K562 (cell line): ENCODE measurements at regions of chr4 and their contacts with region 1.

Region 1: GRCh38 chr4:183261953-183262775 is 57.9 kb downstream of the CLDN22 start:
- DNase-seq: peak; percentile 70 to 85 (median 72)
- ATAC-seq: peak; percentile 98
- H3K4me3 ChIP-seq: no peak overlapping the region
- H3K27ac ChIP-seq: no peak overlapping the region
- H3K4me1 ChIP-seq: peaks cover 0 to 4% of the 10 kb centered on the region in 2 experiments; a peak in 3 of 5 replicates
- H3K27me3 ChIP-seq: no peaks in the 10 kb centered on the region
- CTCF ChIP-seq: peak; percentile 86 to 91 (median 88)
- EP300 ChIP-seq: no peak
- POLR2A ChIP-seq: no peak
- RAD21 ChIP-seq: peak; percentile 77 to 85

Region 2: DNA sequence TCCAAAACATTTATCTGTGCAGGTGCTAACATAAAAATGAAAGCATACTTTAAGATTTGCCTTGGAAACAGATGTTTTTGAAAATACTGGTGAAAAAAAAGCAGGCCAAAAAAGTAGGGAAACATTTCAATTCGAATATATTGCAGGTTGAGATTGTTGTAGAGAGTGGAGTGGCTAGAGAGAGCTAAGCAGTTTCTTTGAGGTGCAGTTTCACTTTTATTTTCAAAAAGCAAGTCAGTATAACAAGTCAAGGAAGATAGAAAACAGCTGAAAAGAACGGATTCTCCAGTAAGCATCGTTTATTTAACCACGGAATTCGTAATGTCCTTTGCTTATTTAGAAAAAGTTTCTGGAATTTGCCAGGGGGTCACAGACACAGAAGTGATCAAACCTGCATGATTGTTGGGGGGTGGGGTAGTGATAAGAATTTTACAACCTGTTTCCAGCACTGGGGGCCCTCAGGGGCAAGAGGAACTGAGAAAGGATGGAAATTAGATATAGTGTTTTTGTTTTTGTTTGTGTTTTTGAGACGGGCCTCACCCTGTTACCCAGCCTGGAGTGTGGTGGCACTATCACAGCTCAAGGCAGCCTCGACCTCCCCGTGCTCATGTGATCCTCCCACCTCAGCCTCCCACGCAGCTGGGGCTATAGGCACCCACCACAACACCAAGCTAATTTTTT is 844.0 kb before region 1 on chr4:
- CTCF ChIA-PET with region 1: no interaction called
- POLR2A ChIA-PET with region 1: no interaction called
- in situ Hi-C with region 1: no loop called
- intact Hi-C with region 1: no loop called
- DNase-seq: no peak
- ATAC-seq: no peak
- H3K4me3 ChIP-seq: no peak overlapping the region
- H3K27ac ChIP-seq: no peak overlapping the region
- H3K4me1 ChIP-seq: no peaks in the 10 kb centered on the region
- H3K27me3 ChIP-seq: no peaks in the 10 kb centered on the region
- CTCF ChIP-seq: no peak
- EP300 ChIP-seq: no peak
- POLR2A ChIP-seq: no peak
- RAD21 ChIP-seq: no peak

Region 3: GRCh38 chr4:182449930-182450439 is 812.2 kb before region 1 on chr4:
- CTCF ChIA-PET with region 1: no interaction called
- POLR2A ChIA-PET with region 1: no interaction called
- in situ Hi-C with region 1: loop called (anchors 25 kb)
- intact Hi-C with region 1: no loop called
- DNase-seq: no peak
- ATAC-seq: no peak
- H3K4me3 ChIP-seq: no peak overlapping the region
- H3K27ac ChIP-seq: no peak overlapping the region
- H3K4me1 ChIP-seq: peaks cover 0 to 9% of the 10 kb centered on the region in 2 experiments; a peak in 2 of 5 replicates
- H3K27me3 ChIP-seq: peaks cover 11 to 16% of the 10 kb centered on the region in 2 experiments; a peak in 2 of 5 replicates
- CTCF ChIP-seq: no peak
- EP300 ChIP-seq: no peak
- POLR2A ChIP-seq: no peak
- RAD21 ChIP-seq: no peak

Region 4: GRCh38 chr4:182806259-182807252 is 455.6 kb before region 1 on chr4:
- CTCF ChIA-PET with region 1: no interaction called
- POLR2A ChIA-PET with region 1: no interaction called
- in situ Hi-C with region 1: no loop called
- intact Hi-C with region 1: loop called (anchors 10 kb)
- DNase-seq: peak; percentile 70 to 77 (median 76)
- ATAC-seq: peak; percentile 99
- H3K4me3 ChIP-seq: no peak overlapping the region
- H3K27ac ChIP-seq: no peak overlapping the region
- H3K4me1 ChIP-seq: peaks cover 0 to 19% of the 10 kb centered on the region in 2 experiments; a peak in 3 of 5 replicates
- H3K27me3 ChIP-seq: peaks cover 11 to 28% of the 10 kb centered on the region in 2 experiments; a peak in 3 of 5 replicates
- CTCF ChIP-seq: peak; percentile 81 to 95 (median 83)
- EP300 ChIP-seq: no peak
- POLR2A ChIP-seq: no peak
- RAD21 ChIP-seq: peak; percentile 56 to 79

Region 5: GRCh38 chr4:182938205-182938645 is 323.9 kb before region 1 on chr4:
- CTCF ChIA-PET with region 1: interaction called, 44 read pairs
- POLR2A ChIA-PET with region 1: interaction called, 4 read pairs
- in situ Hi-C with region 1: no loop called
- intact Hi-C with region 1: loop called (anchors 1 kb)
- DNase-seq: peak; percentile 63 to 79 (median 72)
- ATAC-seq: peak; percentile 100
- H3K4me3 ChIP-seq: no peak overlapping the region
- H3K27ac ChIP-seq: no peak overlapping the region
- H3K4me1 ChIP-seq: peaks cover 0 to 3% of the 10 kb centered on the region in 2 experiments; a peak in 1 of 5 replicates
- H3K27me3 ChIP-seq: peaks cover 0 to 6% of the 10 kb centered on the region in 2 experiments; a peak in 1 of 5 replicates
- CTCF ChIP-seq: peak; percentile 93 to 94 (median 93)
- EP300 ChIP-seq: no peak
- POLR2A ChIP-seq: no peak
- RAD21 ChIP-seq: peak; percentile 97

Region 6: DNA sequence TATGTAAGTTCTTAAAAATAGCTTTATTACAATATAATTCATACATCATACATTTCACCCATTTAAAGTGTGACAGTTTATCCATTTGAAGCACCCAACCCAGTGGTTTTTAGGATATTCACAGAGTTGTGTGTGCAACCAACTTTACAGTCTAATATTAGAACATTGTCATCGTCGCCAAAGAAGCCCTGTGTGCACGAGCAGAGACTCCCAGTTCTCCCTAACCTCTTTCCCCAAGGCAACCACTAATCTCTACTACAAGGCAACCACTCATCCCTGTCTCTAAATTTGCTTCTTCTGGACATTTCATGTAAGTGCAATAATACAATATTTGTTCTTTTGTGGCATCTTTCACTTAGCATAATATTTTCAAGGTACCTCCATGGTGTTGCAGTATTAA is 10.2 kb after region 1 on chr4:
- CTCF ChIA-PET with region 1: no interaction called
- POLR2A ChIA-PET with region 1: no interaction called
- in situ Hi-C with region 1: no loop called
- intact Hi-C with region 1: no loop called
- DNase-seq: no peak
- ATAC-seq: no peak
- H3K4me3 ChIP-seq: no peak overlapping the region
- H3K27ac ChIP-seq: no peak overlapping the region
- H3K4me1 ChIP-seq: no peaks in the 10 kb centered on the region
- H3K27me3 ChIP-seq: no peaks in the 10 kb centered on the region
- CTCF ChIP-seq: no peak
- EP300 ChIP-seq: no peak
- POLR2A ChIP-seq: no peak
- RAD21 ChIP-seq: no peak

Region 7: GRCh38 chr4:183348706-183349659 is 86.8 kb after region 1 on chr4:
- CTCF ChIA-PET with region 1: no interaction called
- POLR2A ChIA-PET with region 1: no interaction called
- in situ Hi-C with region 1: no loop called
- intact Hi-C with region 1: loop called (anchors 2 kb)
- DNase-seq: peak; percentile 64 to 83 (median 74)
- ATAC-seq: peak; percentile 85
- H3K4me3 ChIP-seq: no peak overlapping the region
- H3K27ac ChIP-seq: peak overlapping the region; percentile 83
- H3K4me1 ChIP-seq: peaks cover 10 to 22% of the 10 kb centered on the region in 2 experiments; a peak in 4 of 5 replicates
- H3K27me3 ChIP-seq: no peaks in the 10 kb centered on the region
- CTCF ChIP-seq: no peak
- EP300 ChIP-seq: peak; percentile 77
- POLR2A ChIP-seq: peak; percentile 76
- RAD21 ChIP-seq: peak in 1 of 2 experiments; percentile 46; a peak in 2 of 4 replicates

Region 8: DNA sequence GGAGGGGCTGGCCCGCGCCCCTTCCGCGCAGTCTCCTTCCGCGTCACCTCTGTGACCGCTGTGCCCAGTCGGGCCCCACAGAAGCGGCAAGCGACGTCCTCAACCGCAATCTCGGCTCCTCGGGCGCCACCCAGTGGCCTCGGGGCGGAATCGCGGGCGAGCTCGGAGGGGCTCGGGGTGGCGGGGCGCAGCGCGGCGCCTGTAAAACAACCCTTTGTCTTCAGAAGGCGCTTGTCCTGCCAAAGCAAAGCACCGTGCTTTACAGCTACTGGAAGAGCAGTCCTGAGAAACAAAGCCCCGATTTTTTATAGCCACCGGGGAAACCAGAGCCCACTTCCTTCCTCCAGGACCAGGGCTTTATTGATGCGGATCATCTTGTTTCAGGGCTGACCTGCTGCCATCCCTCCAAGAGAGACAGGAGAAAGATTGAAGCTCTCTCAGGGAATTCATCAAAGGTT is 145.0 kb after region 1 on chr4:
- CTCF ChIA-PET with region 1: interaction called, 9 read pairs
- POLR2A ChIA-PET with region 1: no interaction called
- in situ Hi-C with region 1: no loop called
- intact Hi-C with region 1: loop called (anchors 1 kb)
- DNase-seq: peak; percentile 78 to 88 (median 80)
- ATAC-seq: peak; percentile 98
- H3K4me3 ChIP-seq: peak overlapping the region; percentile 38
- H3K27ac ChIP-seq: no peak overlapping the region; the same call in 2 of the 3 replicates
- H3K4me1 ChIP-seq: peaks cover 7 to 8% of the 10 kb centered on the region in 2 experiments; a peak in 4 of 5 replicates
- H3K27me3 ChIP-seq: no peaks in the 10 kb centered on the region
- CTCF ChIP-seq: peak; percentile 86 to 92 (median 91)
- EP300 ChIP-seq: no peak; the same call in 1 of the 2 replicates
- POLR2A ChIP-seq: no peak
- RAD21 ChIP-seq: peak; percentile 78 to 85